MCF 10A (cell line): ENCODE measurements at regions of chr10 and their contacts with region 1.

Region 1: GRCh38 chr10:99993701-99994689 is 15.8 kb downstream of the DNMBP start:
- DNase-seq: peak; percentile 77
- H3K4me3 Mint-ChIP-seq: peak overlapping the region; percentile 57
- H3K27ac Mint-ChIP-seq: peak overlapping the region; percentile 82
- H3K4me1 Mint-ChIP-seq: peaks cover 18% of the 10 kb centered on the region
- H3K27me3 Mint-ChIP-seq: no peaks in the 10 kb centered on the region
- CTCF ChIP-seq: no peak

Region 2: GRCh38 chr10:99248824-99249223 is 745.2 kb before region 1 on chr10:
- CTCF ChIA-PET with region 1: no interaction called
- POLR2A ChIA-PET with region 1: no interaction called
- intact Hi-C with region 1: no loop called
- DNase-seq: no peak
- H3K4me3 Mint-ChIP-seq: no peak overlapping the region
- H3K27ac Mint-ChIP-seq: no peak overlapping the region
- H3K4me1 Mint-ChIP-seq: no peaks in the 10 kb centered on the region
- H3K27me3 Mint-ChIP-seq: no peaks in the 10 kb centered on the region
- CTCF ChIP-seq: no peak

Region 3: GRCh38 chr10:99370993-99371392 is 623.0 kb before region 1 on chr10:
- CTCF ChIA-PET with region 1: no interaction called
- POLR2A ChIA-PET with region 1: no interaction called
- intact Hi-C with region 1: no loop called
- DNase-seq: peak; percentile 43
- H3K4me3 Mint-ChIP-seq: no peak overlapping the region
- H3K27ac Mint-ChIP-seq: no peak overlapping the region
- H3K4me1 Mint-ChIP-seq: peaks cover 11% of the 10 kb centered on the region
- H3K27me3 Mint-ChIP-seq: peaks cover 42% of the 10 kb centered on the region
- CTCF ChIP-seq: peak; percentile 47

Region 4: GRCh38 chr10:99976886-99977665 is 16.9 kb before region 1 on chr10:
- CTCF ChIA-PET with region 1: interaction called, 4 read pairs
- POLR2A ChIA-PET with region 1: interaction called, 547 read pairs
- intact Hi-C with region 1: no loop called
- DNase-seq: peak; percentile 88
- H3K4me3 Mint-ChIP-seq: peak overlapping the region; percentile 67
- H3K27ac Mint-ChIP-seq: peak overlapping the region; percentile 100
- H3K4me1 Mint-ChIP-seq: peaks cover 24% of the 10 kb centered on the region
- H3K27me3 Mint-ChIP-seq: no peaks in the 10 kb centered on the region
- CTCF ChIP-seq: no peak